Activated B cell treated with CpG ODN at 0.5 μM for 24 hours (primary cell): ENCODE measurements at regions of chr1 and their contacts with region 1.

Region 1: GRCh38 chr1:96741335-96741734 is 19.8 kb downstream of the PTBP2 start:
- DNase-seq: no peak
- ATAC-seq: no peak
- H3K4me3 Mint-ChIP-seq: no peak overlapping the region
- H3K27ac Mint-ChIP-seq: no peak overlapping the region
- H3K4me1 Mint-ChIP-seq: peaks cover 38% of the 10 kb centered on the region
- H3K27me3 Mint-ChIP-seq: no peaks in the 10 kb centered on the region
- CTCF ChIP-seq: no peak

Region 2: DNA sequence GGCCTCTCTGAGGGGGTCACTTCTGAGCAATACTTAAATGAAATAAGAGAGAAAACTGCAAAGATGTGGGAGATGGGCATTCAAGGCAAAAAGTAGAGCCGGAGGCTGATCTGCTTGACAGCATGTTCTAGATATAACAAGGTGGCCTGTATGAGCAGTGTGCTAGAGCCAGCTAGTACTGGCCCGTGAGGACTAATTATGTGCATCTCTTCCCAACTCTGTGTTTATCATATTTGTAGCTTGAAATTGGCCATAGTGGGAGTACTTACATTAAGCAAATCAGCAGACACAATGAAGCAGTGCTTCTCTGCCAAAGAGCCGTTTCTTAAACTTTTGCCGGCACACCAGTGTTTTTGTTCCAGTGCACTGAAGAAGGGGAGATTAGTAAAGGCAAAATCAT is 32.9 kb before region 1 on chr1:
- CTCF ChIA-PET with region 1: no interaction called
- POLR2A ChIA-PET with region 1: no interaction called
- intact Hi-C with region 1: loop called (anchors 5 kb)
- DNase-seq: no peak
- ATAC-seq: no peak
- H3K4me3 Mint-ChIP-seq: no peak overlapping the region
- H3K27ac Mint-ChIP-seq: no peak overlapping the region
- H3K4me1 Mint-ChIP-seq: no peaks in the 10 kb centered on the region
- H3K27me3 Mint-ChIP-seq: peaks cover 5% of the 10 kb centered on the region
- CTCF ChIP-seq: no peak